Right ventricle myocardium superior (tissue), 1 donor: ENCODE measurements at regions of chr12 and their contacts with region 1.

Region 1: DNA sequence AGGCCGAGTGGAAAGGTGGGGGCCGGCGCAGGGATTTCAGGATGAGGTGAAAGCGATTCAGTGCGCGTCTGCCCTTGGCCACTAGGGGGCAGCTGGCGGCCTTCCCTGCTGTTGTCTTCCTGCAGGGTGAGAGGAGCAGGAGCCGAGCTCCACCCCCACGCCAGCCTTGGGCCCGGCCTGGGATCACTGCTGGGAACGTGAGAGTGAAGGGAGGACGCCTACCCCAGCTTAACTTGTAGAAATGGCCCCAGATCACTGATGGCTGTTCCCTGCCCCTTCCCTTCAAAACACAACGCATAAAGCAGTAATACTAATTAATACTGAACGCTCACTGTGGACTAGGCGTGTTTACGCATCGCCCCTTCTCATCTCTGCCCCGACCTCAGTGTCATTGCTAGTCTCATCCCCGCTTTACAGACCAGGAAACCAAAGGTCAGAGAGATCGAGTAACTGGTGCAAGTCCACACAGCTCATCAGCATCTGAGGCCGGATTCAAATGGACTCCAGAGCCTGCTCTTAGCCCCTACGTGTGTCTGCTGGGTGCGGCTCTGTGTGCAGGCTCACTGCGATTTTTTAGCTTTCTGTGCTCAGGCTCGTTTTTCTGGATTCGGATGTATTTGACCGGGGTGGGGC is 24.3 kb downstream of the MVK start:
- DNase-seq: peak; percentile 92
- ATAC-seq: peak; percentile 90

Region 2: GRCh38 chr12:109222496-109222895 is 375.4 kb before region 1 on chr12:
- intact Hi-C with region 1: no loop called
- DNase-seq: no peak
- ATAC-seq: no peak

Region 3: GRCh38 chr12:109518820-109519665 is 78.9 kb before region 1 on chr12:
- intact Hi-C with region 1: loop called (anchors 5 kb)
- DNase-seq: peak; percentile 74
- ATAC-seq: peak; percentile 71

Region 4: GRCh38 chr12:109713187-109713984 is 115.5 kb after region 1 on chr12 and contains the start of gene FAM222A:
- intact Hi-C with region 1: loop called (anchors 10 kb)
- DNase-seq: peak; percentile 97
- ATAC-seq: peak; percentile 96
- total RNA-seq, gene FAM222A: 25.0 TPM